Right ventricle myocardium superior (tissue), 1 donor: ENCODE measurements at regions of chr6 and their contacts with region 1.

Region 1: DNA sequence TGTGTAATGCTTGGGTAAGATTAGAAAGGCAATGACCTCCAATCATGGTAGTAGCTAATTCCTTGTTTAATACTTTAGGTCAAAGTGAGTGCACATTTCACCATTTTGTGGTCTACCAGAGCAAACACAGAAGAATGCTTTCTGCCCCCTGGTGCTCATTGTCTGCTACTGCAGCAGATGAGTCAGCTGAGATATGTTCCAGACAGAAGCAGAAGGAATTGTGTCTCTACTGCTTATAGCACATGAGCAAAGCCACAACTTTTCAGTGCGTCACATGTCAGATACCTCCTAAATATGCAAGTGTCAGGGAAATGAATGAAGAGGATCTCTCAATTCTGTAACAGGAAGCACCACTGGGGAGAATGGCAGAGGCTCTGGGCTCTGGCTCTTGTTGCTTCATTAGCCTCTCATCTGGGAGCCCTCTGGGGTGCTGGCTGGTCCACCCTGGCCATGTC is 308.9 kb downstream of the ALDH8A1 start:
- DNase-seq: peak; percentile 82
- ATAC-seq: peak; percentile 96

Region 2: DNA sequence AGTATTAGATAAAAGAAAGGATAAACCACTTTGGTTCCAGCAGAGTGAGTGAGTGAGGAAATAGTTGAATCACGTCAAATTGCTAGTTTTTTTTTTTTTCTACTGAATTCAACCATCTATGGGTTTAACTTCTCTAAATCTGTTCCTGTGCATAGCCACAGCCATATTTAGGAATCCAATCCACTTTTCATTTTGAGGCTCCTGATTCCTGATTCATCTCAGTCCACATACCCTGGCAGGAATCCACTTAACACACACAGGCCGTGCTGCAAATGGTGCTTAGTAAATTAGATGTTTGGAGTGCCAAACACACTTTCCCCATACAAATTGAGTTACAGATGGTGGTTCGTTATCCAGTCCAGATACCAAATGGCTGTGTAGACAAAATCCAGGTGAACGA is 88.6 kb after region 1 on chr6:
- intact Hi-C with region 1: no loop called
- DNase-seq: no peak
- ATAC-seq: no peak

Region 3: GRCh38 chr6:134822920-134823709 is 182.1 kb after region 1 on chr6:
- intact Hi-C with region 1: loop called (anchors 5 kb)
- DNase-seq: peak; percentile 55
- ATAC-seq: peak; percentile 84